Activated naive CD4-positive, alpha-beta T cell treated with anti-CD3 and anti-CD28 coated beads for 36 hours (primary cell): ENCODE measurements at regions of chr1 and their contacts with region 1.

Region 1: GRCh38 chr1:167635156-167635648 is 5.2 kb downstream of the RCSD1 start:
- DNase-seq: peak; percentile 2
- H3K4me3 Mint-ChIP-seq: no peak overlapping the region
- H3K27ac Mint-ChIP-seq: peak overlapping the region; percentile 60
- H3K4me1 Mint-ChIP-seq: peaks cover 73% of the 10 kb centered on the region
- H3K27me3 Mint-ChIP-seq: no peaks in the 10 kb centered on the region

Region 2: GRCh38 chr1:167491586-167492461 is 143.4 kb before region 1 on chr1:
- CTCF ChIA-PET with region 1: no interaction called
- intact Hi-C with region 1: no loop called
- DNase-seq: peak; percentile 60
- H3K4me3 Mint-ChIP-seq: peak overlapping the region; percentile 69
- H3K27ac Mint-ChIP-seq: peak overlapping the region; percentile 92
- H3K4me1 Mint-ChIP-seq: peaks cover 94% of the 10 kb centered on the region
- H3K27me3 Mint-ChIP-seq: no peaks in the 10 kb centered on the region

Region 3: GRCh38 chr1:167617153-167618147 is 17.8 kb before region 1 on chr1:
- CTCF ChIA-PET with region 1: interaction called, 23 read pairs
- intact Hi-C with region 1: loop called (anchors 2 kb)
- DNase-seq: peak; percentile 46
- H3K4me3 Mint-ChIP-seq: peak overlapping the region; percentile 70
- H3K27ac Mint-ChIP-seq: peak overlapping the region; percentile 90
- H3K4me1 Mint-ChIP-seq: peaks cover 48% of the 10 kb centered on the region
- H3K27me3 Mint-ChIP-seq: no peaks in the 10 kb centered on the region

Region 4: DNA sequence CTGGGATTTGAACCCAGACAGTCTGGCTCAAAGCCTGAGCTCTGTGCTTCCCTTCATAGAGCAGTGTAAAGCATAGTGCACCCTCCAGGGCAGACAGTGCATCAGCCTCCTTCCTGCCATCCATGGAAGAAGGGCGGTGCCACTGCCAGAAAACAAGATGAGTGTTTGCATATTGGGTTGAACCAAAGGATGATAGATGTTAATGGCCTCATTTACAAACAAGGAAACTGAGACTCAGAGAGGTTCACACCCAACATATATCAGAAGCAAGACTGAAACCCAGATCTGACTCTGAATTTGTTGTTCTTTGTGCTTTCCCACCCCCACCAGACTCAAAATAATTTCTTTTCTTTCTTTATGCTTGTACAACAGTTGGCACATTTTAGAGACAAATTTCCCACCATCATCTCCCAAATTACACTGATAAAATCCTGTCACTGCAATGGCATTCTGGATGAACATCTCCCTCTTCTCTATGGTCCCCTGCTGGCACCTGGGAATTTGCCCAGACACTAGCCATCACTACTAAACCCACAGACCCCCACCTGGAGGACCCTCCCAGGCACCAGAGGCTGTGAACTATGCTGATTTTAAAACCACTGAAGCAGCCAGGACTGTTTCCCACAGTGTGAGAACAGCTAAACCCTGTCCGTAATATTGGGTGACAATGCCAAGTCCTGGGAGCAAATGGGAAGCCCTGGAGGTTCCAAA is 41.2 kb after region 1 on chr1:
- CTCF ChIA-PET with region 1: interaction called, 3 read pairs
- intact Hi-C with region 1: loop called (anchors 2 kb)
- DNase-seq: peak; percentile 70
- H3K4me3 Mint-ChIP-seq: no peak overlapping the region
- H3K27ac Mint-ChIP-seq: peak overlapping the region; percentile 42
- H3K4me1 Mint-ChIP-seq: peaks cover 35% of the 10 kb centered on the region
- H3K27me3 Mint-ChIP-seq: no peaks in the 10 kb centered on the region

Region 5: GRCh38 chr1:169630006-169630405 is 1994.8 kb after region 1 on chr1 and contains the start of gene SELP:
- CTCF ChIA-PET with region 1: no interaction called
- intact Hi-C with region 1: no loop called
- DNase-seq: no peak
- H3K4me3 Mint-ChIP-seq: no peak within 1 kb of the TSS
- H3K27ac Mint-ChIP-seq: peak within 1 kb of the TSS; percentile 47
- H3K4me1 Mint-ChIP-seq: peaks cover 65% of the 10 kb centered on the region
- H3K27me3 Mint-ChIP-seq: no peaks in the 10 kb centered on the region
- total RNA-seq, gene SELP: 2.4 to 2.6 TPM